ENCODE measurements at regions of chr7 and their contacts with region 1.

Region 1: GRCh38 chr7:129091484-129092002 is 36.6 kb upstream of the TNPO3 start:
- DNase-seq: peak; percentile 71 to 80
- ATAC-seq: peak; percentile 75 to 87 (median 84)
- H3K4me3 ChIP-seq: no peak overlapping the region
- H3K27ac ChIP-seq: no peak overlapping the region
- H3K4me1 ChIP-seq: peaks cover 0 to 13% (median 0%) of the 10 kb centered on the region in 9 donors
- H3K27me3 ChIP-seq: peaks cover 0 to 11% (median 0%) of the 10 kb centered on the region in 7 donors
- CTCF ChIP-seq: peak; percentile 85 to 99 (median 96)

Region 2: DNA sequence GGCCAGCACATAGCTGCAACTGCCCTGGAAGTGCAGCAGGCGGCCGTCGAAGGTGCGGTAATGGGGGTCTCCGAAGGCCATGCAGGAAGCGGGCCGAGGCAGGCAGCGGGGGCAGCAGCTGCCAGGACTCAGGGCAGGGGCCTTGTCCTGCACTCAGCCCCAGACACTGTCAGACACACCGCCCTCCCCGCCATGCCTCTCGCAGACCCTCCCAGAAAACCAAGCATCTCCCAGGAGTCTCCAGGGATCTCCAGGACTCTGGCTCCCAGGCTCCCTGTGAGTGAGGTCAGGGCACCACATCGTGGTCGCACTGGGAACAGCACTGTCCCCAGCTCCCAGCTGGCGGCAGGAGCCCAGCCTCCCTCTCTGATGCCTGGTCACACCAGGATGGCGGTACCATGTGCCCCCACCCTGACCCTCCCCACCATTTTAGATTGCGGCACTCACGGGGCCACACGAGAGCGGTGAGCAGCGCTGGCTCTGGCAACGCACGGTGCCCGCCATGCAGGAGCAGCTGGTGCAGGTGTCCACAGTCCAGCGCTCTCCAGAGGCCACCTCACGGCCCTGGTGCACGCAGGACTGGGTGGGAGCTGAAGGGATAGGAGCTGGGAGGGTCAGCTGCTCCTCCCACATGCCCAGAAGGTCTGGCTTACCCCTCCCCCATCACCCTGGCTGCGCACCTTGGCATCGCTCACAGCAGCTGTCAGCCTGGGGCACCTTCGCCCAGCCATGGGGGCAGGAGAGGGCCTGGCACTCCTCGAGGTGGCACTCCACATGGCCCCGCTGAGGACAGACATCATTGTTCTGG is 211.4 kb before region 1 on chr7:
- intact Hi-C with region 1: no loop called
- DNase-seq: peak; percentile 54 to 71
- ATAC-seq: peak; percentile 60 to 87 (median 83)
- H3K4me3 ChIP-seq: no peak overlapping the region
- H3K27ac ChIP-seq: no peak overlapping the region
- H3K4me1 ChIP-seq: peaks cover 0 to 15% (median 0%) of the 10 kb centered on the region in 9 donors
- H3K27me3 ChIP-seq: no peaks in the 10 kb centered on the region
- CTCF ChIP-seq: peak; percentile 61 to 89 (median 82)

Region 3: GRCh38 chr7:128904381-128905197 is 187.0 kb before region 1 on chr7:
- intact Hi-C with region 1: loop called (anchors 1 to 10 kb)
- DNase-seq: no peak
- ATAC-seq: peak in 5 of 8 donors; percentile 16 to 60 (median 25)
- H3K4me3 ChIP-seq: no peak overlapping the region
- H3K27ac ChIP-seq: no peak overlapping the region
- H3K4me1 ChIP-seq: peaks cover 0 to 3% (median 2%) of the 10 kb centered on the region in 9 donors
- H3K27me3 ChIP-seq: peaks cover 0 to 50% (median 31%) of the 10 kb centered on the region in 7 donors
- CTCF ChIP-seq: peak; percentile 5 to 67 (median 58)

Region 4: GRCh38 chr7:129009437-129009836 is 82.1 kb before region 1 on chr7:
- intact Hi-C with region 1: loop called in 1 of 10 experiments (anchors 10 kb)
- DNase-seq: no peak
- ATAC-seq: no peak
- H3K4me3 ChIP-seq: no peak overlapping the region
- H3K27ac ChIP-seq: no peak overlapping the region
- H3K4me1 ChIP-seq: peaks cover 0 to 22% (median 5%) of the 10 kb centered on the region in 9 donors
- H3K27me3 ChIP-seq: no peaks in the 10 kb centered on the region
- CTCF ChIP-seq: no peak

Region 5: GRCh38 chr7:129238546-129238945 is 147.0 kb after region 1 on chr7:
- intact Hi-C with region 1: no loop called
- DNase-seq: no peak
- ATAC-seq: no peak
- H3K4me3 ChIP-seq: no peak overlapping the region
- H3K27ac ChIP-seq: no peak overlapping the region
- H3K4me1 ChIP-seq: no peaks in the 10 kb centered on the region
- H3K27me3 ChIP-seq: no peaks in the 10 kb centered on the region
- CTCF ChIP-seq: no peak